Activated CD4-positive, alpha-beta memory T cell treated with anti-CD3 and anti-CD28 coated beads, Interleukin-2, amount 10 ng/mL, durations not matched to agents 7 days and 5 days (primary cell): ENCODE measurements at regions of chr4 and their contacts with region 1.

Region 1: GRCh38 chr4:52911684-52912294 is 49.7 kb downstream of the RASL11B start:
- DNase-seq: peak; percentile 74
- H3K4me3 Mint-ChIP-seq: no peak overlapping the region
- H3K27ac Mint-ChIP-seq: no peak overlapping the region
- H3K4me1 Mint-ChIP-seq: peaks cover 10% of the 10 kb centered on the region
- H3K27me3 Mint-ChIP-seq: no peaks in the 10 kb centered on the region

Region 2: DNA sequence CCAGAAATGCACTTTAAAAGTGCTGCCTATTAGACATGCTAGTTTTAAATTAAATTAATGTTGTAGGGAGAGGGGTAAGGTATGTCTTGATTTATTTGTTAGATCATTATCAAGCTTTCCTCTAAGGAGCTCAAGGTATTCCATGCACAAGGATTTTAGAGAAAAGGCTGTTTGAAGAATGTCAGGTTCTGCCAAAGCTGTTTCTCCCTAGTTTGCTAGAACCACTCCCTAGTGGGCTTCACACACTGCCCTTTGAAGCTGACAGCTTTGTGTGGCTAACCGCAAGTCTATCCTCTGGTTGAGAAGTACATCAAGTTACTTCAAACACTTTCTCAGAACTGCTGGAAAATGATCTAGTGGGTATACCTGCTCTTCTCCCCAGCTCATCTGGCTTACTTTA is 17.3 kb before region 1 on chr4:
- CTCF ChIA-PET with region 1: interaction called, 11 read pairs
- POLR2A ChIA-PET with region 1: no interaction called
- DNase-seq: no peak
- H3K4me3 Mint-ChIP-seq: no peak overlapping the region
- H3K27ac Mint-ChIP-seq: no peak overlapping the region
- H3K4me1 Mint-ChIP-seq: peaks cover 23% of the 10 kb centered on the region
- H3K27me3 Mint-ChIP-seq: no peaks in the 10 kb centered on the region

Region 3: GRCh38 chr4:52925531-52925968 is 13.8 kb after region 1 on chr4:
- CTCF ChIA-PET with region 1: interaction called, 23 read pairs
- POLR2A ChIA-PET with region 1: no interaction called
- DNase-seq: no peak
- H3K4me3 Mint-ChIP-seq: no peak overlapping the region
- H3K27ac Mint-ChIP-seq: no peak overlapping the region
- H3K4me1 Mint-ChIP-seq: no peaks in the 10 kb centered on the region
- H3K27me3 Mint-ChIP-seq: no peaks in the 10 kb centered on the region